IMR-90 (cell line): ENCODE measurements at regions of chr9 and their contacts with region 1.

Region 1: DNA sequence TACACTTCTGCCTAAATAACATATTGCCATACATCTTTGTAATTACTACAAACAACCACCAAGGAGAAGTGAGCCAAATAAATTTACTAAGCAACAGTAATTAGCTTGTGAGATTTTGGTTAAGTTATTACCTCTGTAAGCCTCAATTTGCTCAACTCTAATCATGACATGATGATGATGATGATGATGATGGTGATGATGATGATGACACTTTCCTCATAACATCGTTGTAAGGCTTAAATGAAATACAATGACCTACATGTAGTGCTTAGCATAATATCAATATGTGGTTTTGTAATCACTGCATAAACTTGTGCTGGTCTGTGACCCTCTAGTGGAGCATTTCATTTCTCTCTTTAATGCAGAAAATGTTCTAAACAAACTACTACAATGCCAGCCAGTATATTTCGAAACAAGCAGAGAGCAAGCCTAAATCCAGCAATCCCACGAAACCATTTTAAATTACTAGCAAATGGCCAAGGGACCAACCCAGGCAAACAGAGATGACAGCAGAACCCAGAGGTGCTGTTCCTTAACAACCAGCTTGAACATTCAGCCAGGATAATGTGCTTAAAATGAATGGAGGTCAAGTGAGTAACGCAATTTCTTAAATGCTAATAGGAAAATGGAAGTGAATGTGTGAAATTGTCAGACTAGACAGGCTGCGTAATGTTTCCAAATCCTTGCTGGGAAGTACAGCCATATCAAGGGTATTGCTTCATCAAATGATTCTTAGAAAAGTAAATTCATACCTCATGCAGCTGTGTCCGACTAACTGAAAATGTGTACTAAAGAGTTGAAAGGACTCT is 281.9 kb upstream of the PUM3 start:
- DNase-seq: no peak
- ATAC-seq: no peak
- H3K4me3 ChIP-seq: no peak overlapping the region
- H3K27ac ChIP-seq: no peak overlapping the region
- H3K4me1 ChIP-seq: no peaks in the 10 kb centered on the region
- H3K27me3 ChIP-seq: no peaks in the 10 kb centered on the region
- CTCF ChIP-seq: no peak
- POLR2A ChIP-seq: no peak
- RAD21 ChIP-seq: no peak

Region 2: GRCh38 chr9:3028535-3028934 is 97.3 kb before region 1 on chr9:
- CTCF ChIA-PET with region 1: no interaction called
- POLR2A ChIA-PET with region 1: no interaction called
- dilution Hi-C with region 1: no loop called
- in situ Hi-C with region 1: no loop called
- intact Hi-C with region 1: no loop called
- DNase-seq: no peak
- ATAC-seq: no peak
- H3K4me3 ChIP-seq: no peak overlapping the region
- H3K27ac ChIP-seq: no peak overlapping the region
- H3K4me1 ChIP-seq: no peaks in the 10 kb centered on the region
- H3K27me3 ChIP-seq: no peaks in the 10 kb centered on the region
- CTCF ChIP-seq: no peak
- POLR2A ChIP-seq: no peak
- RAD21 ChIP-seq: no peak

Region 3: DNA sequence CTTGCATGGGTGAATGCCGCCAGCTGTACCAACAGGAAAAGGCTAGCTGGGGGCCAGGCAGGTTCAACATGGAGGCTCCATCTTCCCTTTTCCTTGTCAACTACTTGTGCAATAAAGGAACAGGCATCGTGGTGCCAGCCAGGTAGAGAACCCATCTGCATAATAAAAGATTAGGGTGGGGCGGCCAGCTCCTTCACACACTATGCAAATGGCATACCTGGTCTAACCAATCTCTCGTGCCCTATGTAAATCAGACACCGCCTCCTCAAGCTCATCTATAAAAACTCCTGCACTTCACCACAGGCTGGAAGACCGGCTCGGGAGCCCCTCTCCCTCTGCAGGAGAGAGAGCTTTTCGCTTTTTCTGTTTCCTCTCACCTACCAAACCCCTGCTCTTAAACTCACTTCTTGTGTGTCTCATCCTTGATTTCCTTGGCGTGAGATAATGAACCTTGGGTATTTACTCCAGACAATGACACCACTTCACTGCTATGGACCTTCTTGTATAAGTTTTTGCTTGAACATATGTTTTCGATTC is 37.6 kb before region 1 on chr9:
- CTCF ChIA-PET with region 1: no interaction called
- POLR2A ChIA-PET with region 1: no interaction called
- dilution Hi-C with region 1: no loop called
- in situ Hi-C with region 1: no loop called
- intact Hi-C with region 1: no loop called
- DNase-seq: no peak
- ATAC-seq: no peak
- H3K4me3 ChIP-seq: no peak overlapping the region
- H3K27ac ChIP-seq: no peak overlapping the region
- H3K4me1 ChIP-seq: no peaks in the 10 kb centered on the region
- H3K27me3 ChIP-seq: no peaks in the 10 kb centered on the region
- CTCF ChIP-seq: no peak
- POLR2A ChIP-seq: no peak
- RAD21 ChIP-seq: no peak

Region 4: DNA sequence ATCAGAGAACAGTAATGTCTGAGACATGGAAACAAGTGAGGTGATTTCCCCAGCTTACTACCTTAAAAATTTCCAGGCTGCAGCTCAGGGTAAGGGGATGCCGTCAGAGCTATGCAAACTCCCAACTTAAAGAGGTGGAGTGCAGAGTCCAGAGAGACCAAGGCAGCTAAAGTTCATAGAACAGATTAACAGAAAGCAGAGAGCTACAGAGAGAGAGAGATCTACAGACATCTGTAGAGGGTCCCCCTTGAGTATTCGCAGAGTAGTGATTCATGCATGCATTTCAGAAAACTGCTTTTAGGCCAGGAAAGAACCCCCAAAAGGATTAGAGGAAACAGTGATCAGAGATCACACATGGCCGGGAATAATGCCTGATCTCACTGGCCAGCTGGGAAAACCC is 24.3 kb after region 1 on chr9:
- CTCF ChIA-PET with region 1: no interaction called
- POLR2A ChIA-PET with region 1: no interaction called
- dilution Hi-C with region 1: no loop called
- in situ Hi-C with region 1: no loop called
- intact Hi-C with region 1: no loop called
- DNase-seq: no peak
- ATAC-seq: no peak
- H3K4me3 ChIP-seq: no peak overlapping the region
- H3K27ac ChIP-seq: no peak overlapping the region
- H3K4me1 ChIP-seq: no peaks in the 10 kb centered on the region
- H3K27me3 ChIP-seq: no peaks in the 10 kb centered on the region
- CTCF ChIP-seq: no peak
- POLR2A ChIP-seq: no peak
- RAD21 ChIP-seq: no peak

Region 5: GRCh38 chr9:3441197-3441816 is 315.5 kb after region 1 on chr9:
- CTCF ChIA-PET with region 1: no interaction called
- POLR2A ChIA-PET with region 1: no interaction called
- dilution Hi-C with region 1: no loop called
- in situ Hi-C with region 1: no loop called
- intact Hi-C with region 1: loop called (anchors 10 kb)
- DNase-seq: peak; percentile 77
- ATAC-seq: peak; percentile 91
- H3K4me3 ChIP-seq: no peak overlapping the region
- H3K27ac ChIP-seq: no peak overlapping the region
- H3K4me1 ChIP-seq: no peaks in the 10 kb centered on the region
- H3K27me3 ChIP-seq: no peaks in the 10 kb centered on the region
- CTCF ChIP-seq: peak; percentile 72
- POLR2A ChIP-seq: no peak
- RAD21 ChIP-seq: peak; percentile 73

Region 6: GRCh38 chr9:3467593-3468219 is 341.9 kb after region 1 on chr9:
- CTCF ChIA-PET with region 1: no interaction called
- POLR2A ChIA-PET with region 1: no interaction called
- dilution Hi-C with region 1: no loop called
- in situ Hi-C with region 1: no loop called
- intact Hi-C with region 1: no loop called
- DNase-seq: peak; percentile 72
- ATAC-seq: peak; percentile 100
- H3K4me3 ChIP-seq: no peak overlapping the region
- H3K27ac ChIP-seq: no peak overlapping the region
- H3K4me1 ChIP-seq: no peaks in the 10 kb centered on the region
- H3K27me3 ChIP-seq: no peaks in the 10 kb centered on the region
- CTCF ChIP-seq: peak; percentile 91
- POLR2A ChIP-seq: peak; percentile 54; the same call in 1 of the 2 replicates
- RAD21 ChIP-seq: peak; percentile 95